B cell (primary cell): ENCODE measurements at regions of chr2 and their contacts with region 1.

Region 1: DNA sequence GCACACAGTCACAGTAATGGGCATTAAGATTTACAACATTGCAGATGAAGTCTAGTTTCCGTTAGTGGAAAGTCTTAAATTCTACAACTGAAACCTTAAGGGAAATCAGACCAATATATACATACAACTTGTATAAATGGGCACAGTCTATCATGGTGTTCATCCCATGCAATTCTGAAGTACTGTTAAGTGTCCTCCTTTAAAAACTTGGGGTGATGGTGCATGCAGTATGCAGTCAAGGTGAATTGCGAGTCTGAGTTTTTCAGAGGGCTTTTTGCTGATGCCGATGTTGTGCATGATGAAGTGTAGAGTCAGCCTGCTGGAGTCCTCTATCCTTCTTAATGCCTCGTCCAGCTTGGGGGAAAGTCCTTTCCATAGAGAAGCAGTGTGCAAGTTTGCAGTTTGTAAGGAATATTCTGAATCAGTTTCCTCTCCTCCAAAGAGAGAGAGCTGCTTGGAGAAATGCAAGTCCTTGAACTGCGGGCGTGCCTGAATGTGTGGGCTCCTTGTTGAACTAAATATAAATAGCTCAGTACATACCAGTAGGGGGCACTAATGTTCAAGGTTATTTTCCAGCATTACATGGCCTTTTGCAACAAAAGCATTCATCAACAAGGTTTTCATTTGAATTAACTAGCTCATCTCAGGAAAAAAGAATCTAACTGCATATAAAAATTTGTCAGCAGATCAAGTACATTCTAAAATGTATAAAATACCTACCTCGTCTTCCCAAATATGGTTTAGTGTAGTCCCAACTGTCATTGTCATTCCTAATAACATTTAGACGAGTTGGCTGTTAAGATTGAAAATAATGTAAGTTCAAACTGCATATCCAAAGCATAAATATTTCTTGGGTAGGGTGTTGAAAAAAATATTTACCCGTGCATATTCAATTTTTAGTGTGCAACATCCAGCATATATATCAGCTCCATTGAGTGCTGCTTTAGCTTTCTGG is 21.3 kb downstream of the HNRNPLL start:
- DNase-seq: peak; percentile 77
- ATAC-seq: peak; percentile 56
- H3K4me3 ChIP-seq: no peak overlapping the region
- H3K4me3 Mint-ChIP-seq: no peak overlapping the region
- H3K27ac ChIP-seq: no peak overlapping the region
- H3K27ac Mint-ChIP-seq: no peak overlapping the region
- H3K4me1 ChIP-seq: no peaks in the 10 kb centered on the region
- H3K4me1 Mint-ChIP-seq: no peaks in the 10 kb centered on the region
- H3K27me3 ChIP-seq: peaks cover 0 to 5% (median 1%) of the 10 kb centered on the region in 4 experiments
- H3K27me3 Mint-ChIP-seq: peaks cover 16% of the 10 kb centered on the region
- CTCF ChIP-seq: peak; percentile 78

Region 2: GRCh38 chr2:38185012-38185491 is 396.4 kb before region 1 on chr2:
- CTCF ChIA-PET with region 1: no interaction called
- POLR2A ChIA-PET with region 1: no interaction called
- intact Hi-C with region 1: no loop called
- DNase-seq: no peak
- ATAC-seq: no peak
- H3K4me3 ChIP-seq: no peak overlapping the region
- H3K4me3 Mint-ChIP-seq: no peak overlapping the region
- H3K27ac ChIP-seq: no peak overlapping the region
- H3K27ac Mint-ChIP-seq: no peak overlapping the region
- H3K4me1 ChIP-seq: peaks cover 4 to 5% of the 10 kb centered on the region in 2 donors
- H3K4me1 Mint-ChIP-seq: peaks cover 11% of the 10 kb centered on the region
- H3K27me3 ChIP-seq: peaks cover 0 to 12% (median 2%) of the 10 kb centered on the region in 4 experiments
- H3K27me3 Mint-ChIP-seq: peaks cover 23% of the 10 kb centered on the region
- CTCF ChIP-seq: no peak

Region 3: GRCh38 chr2:38315707-38316333 is 265.6 kb before region 1 on chr2:
- CTCF ChIA-PET with region 1: interaction called, 15 read pairs
- POLR2A ChIA-PET with region 1: no interaction called
- intact Hi-C with region 1: loop called (anchors 10 kb)
- DNase-seq: peak; percentile 61
- ATAC-seq: peak; percentile 47
- H3K4me3 ChIP-seq: no peak overlapping the region
- H3K4me3 Mint-ChIP-seq: no peak overlapping the region
- H3K27ac ChIP-seq: no peak overlapping the region
- H3K27ac Mint-ChIP-seq: no peak overlapping the region
- H3K4me1 ChIP-seq: no peaks in the 10 kb centered on the region
- H3K4me1 Mint-ChIP-seq: no peaks in the 10 kb centered on the region
- H3K27me3 ChIP-seq: no peaks in the 10 kb centered on the region
- H3K27me3 Mint-ChIP-seq: no peaks in the 10 kb centered on the region
- CTCF ChIP-seq: peak; percentile 76

Region 4: DNA sequence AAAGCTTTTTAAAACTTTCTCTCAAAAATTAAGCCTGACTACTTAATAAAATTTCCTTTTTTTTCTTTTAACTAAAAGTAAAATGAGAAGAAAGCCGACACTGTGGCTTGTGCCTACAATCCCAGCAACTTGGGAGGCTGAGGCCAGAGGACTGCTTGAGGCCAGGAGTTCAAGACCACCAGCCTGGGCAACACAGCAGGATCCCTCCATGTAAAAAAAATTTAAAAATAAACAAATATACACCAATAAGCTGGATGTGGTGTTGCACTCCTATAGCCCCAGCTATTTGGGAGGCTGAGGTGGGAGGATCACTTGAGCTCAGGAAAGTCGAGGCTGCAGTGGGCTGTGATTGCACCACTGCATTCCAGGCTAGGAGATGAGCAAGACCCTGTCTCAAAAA is 16.1 kb before region 1 on chr2:
- CTCF ChIA-PET with region 1: interaction called, 14 read pairs
- POLR2A ChIA-PET with region 1: no interaction called
- intact Hi-C with region 1: no loop called
- DNase-seq: no peak
- ATAC-seq: no peak
- H3K4me3 ChIP-seq: no peak overlapping the region
- H3K4me3 Mint-ChIP-seq: no peak overlapping the region
- H3K27ac ChIP-seq: no peak overlapping the region
- H3K27ac Mint-ChIP-seq: no peak overlapping the region
- H3K4me1 ChIP-seq: no peaks in the 10 kb centered on the region
- H3K4me1 Mint-ChIP-seq: no peaks in the 10 kb centered on the region
- H3K27me3 ChIP-seq: no peaks in the 10 kb centered on the region
- H3K27me3 Mint-ChIP-seq: no peaks in the 10 kb centered on the region
- CTCF ChIP-seq: no peak

Region 5: GRCh38 chr2:38720613-38721241 is 139.3 kb after region 1 on chr2:
- CTCF ChIA-PET with region 1: interaction called, 35 read pairs
- POLR2A ChIA-PET with region 1: no interaction called
- intact Hi-C with region 1: no loop called
- DNase-seq: no peak
- ATAC-seq: no peak
- H3K4me3 ChIP-seq: no peak overlapping the region
- H3K4me3 Mint-ChIP-seq: no peak overlapping the region
- H3K27ac ChIP-seq: no peak overlapping the region
- H3K27ac Mint-ChIP-seq: no peak overlapping the region
- H3K4me1 ChIP-seq: peaks cover 11% of the 10 kb centered on the region in 2 donors
- H3K4me1 Mint-ChIP-seq: peaks cover 21% of the 10 kb centered on the region
- H3K27me3 ChIP-seq: no peaks in the 10 kb centered on the region
- H3K27me3 Mint-ChIP-seq: no peaks in the 10 kb centered on the region
- CTCF ChIP-seq: no peak

Region 6: GRCh38 chr2:38740851-38741731 is 159.6 kb after region 1 on chr2:
- CTCF ChIA-PET with region 1: interaction called, 85 read pairs
- POLR2A ChIA-PET with region 1: no interaction called
- intact Hi-C with region 1: loop called (anchors 1 kb)
- DNase-seq: peak; percentile 69
- ATAC-seq: peak; percentile 16
- H3K4me3 ChIP-seq: no peak overlapping the region
- H3K4me3 Mint-ChIP-seq: no peak overlapping the region
- H3K27ac ChIP-seq: peak overlapping the region in 1 of 2 donors; percentile 4
- H3K27ac Mint-ChIP-seq: peak overlapping the region; percentile 50
- H3K4me1 ChIP-seq: no peaks in the 10 kb centered on the region
- H3K4me1 Mint-ChIP-seq: peaks cover 24% of the 10 kb centered on the region
- H3K27me3 ChIP-seq: no peaks in the 10 kb centered on the region
- H3K27me3 Mint-ChIP-seq: no peaks in the 10 kb centered on the region
- CTCF ChIP-seq: peak; percentile 80

Region 7: DNA sequence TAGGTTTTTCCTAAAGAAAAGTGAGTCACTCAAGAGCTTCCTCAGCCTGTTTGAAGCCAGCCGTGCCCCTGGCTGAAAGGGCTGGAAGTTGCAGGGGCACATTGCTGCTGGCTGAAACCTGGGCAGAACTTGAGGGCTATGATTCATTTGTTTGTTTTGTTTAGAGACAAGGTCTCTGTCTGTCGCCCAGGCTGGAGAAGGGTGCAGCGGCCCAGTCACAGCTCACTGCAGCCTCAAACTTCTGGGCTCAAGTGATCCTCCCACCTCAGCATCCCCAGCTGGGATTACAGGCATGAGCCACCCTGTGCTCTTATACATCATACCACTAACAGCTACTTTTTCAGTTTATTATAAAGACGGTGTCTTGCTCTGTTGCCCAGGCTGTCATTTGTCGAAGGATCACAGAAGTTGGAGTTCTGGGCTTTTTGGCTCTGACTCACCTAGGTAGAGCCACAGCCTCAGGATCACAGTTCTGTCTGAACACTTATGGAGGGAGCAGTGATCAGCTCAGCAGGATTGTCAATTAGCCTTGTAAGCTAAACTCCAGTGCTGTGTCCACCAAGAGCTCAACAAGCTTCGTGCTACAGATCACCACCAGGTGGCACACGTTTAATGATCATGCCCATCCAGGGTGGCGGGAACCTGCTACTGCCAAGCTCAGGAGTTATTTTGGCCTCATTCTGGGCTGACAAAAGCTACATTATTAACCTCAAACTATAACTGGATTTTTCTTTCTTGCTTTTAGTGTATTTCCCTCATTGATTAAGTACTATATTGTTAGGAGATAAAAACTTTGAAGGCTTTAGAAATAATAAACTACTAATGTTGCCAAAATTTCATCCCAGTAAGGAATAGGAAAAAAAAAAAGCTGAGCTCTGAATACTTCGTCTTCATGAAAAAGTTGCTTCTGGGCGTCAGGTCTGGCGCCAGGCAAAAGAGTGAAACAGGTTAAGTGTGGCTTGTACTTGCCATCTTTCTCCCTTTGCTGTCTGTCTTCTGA is 366.1 kb after region 1 on chr2:
- CTCF ChIA-PET with region 1: interaction called, 13 read pairs
- POLR2A ChIA-PET with region 1: no interaction called
- intact Hi-C with region 1: no loop called
- DNase-seq: peak; percentile 65
- ATAC-seq: peak; percentile 57
- H3K4me3 ChIP-seq: no peak overlapping the region
- H3K4me3 Mint-ChIP-seq: no peak overlapping the region
- H3K27ac ChIP-seq: no peak overlapping the region
- H3K27ac Mint-ChIP-seq: no peak overlapping the region
- H3K4me1 ChIP-seq: no peaks in the 10 kb centered on the region
- H3K4me1 Mint-ChIP-seq: no peaks in the 10 kb centered on the region
- H3K27me3 ChIP-seq: no peaks in the 10 kb centered on the region
- H3K27me3 Mint-ChIP-seq: no peaks in the 10 kb centered on the region
- CTCF ChIP-seq: peak; percentile 77